ENCODE measurements at regions of chr11 and their contacts with region 1.

Region 1: GRCh38 chr11:12235947-12236743 is 125.8 kb downstream of the MICAL2 start:
- DNase-seq: peak; percentile 32
- ATAC-seq: peak; percentile 75
- H3K4me3 ChIP-seq: no peak overlapping the region
- H3K27ac ChIP-seq: no peak overlapping the region
- H3K4me1 ChIP-seq: peaks cover 4 to 23% of the 10 kb centered on the region in 2 experiments; a peak in 3 of 4 replicates
- H3K27me3 ChIP-seq: no peaks in the 10 kb centered on the region
- CTCF ChIP-seq: peak; percentile 55 to 82 (median 69)
- POLR2A ChIP-seq: no peak
- RAD21 ChIP-seq: peak; percentile 83

Region 2: GRCh38 chr11:12029738-12030363 is 206.3 kb before region 1 on chr11:
- CTCF ChIA-PET with region 1: no interaction called
- POLR2A ChIA-PET with region 1: no interaction called
- RAD21 ChIA-PET with region 1: no interaction called
- intact Hi-C with region 1: no loop called
- DNase-seq: peak; percentile 47
- ATAC-seq: peak; percentile 92
- H3K4me3 ChIP-seq: no peak overlapping the region
- H3K27ac ChIP-seq: no peak overlapping the region
- H3K4me1 ChIP-seq: peaks cover 8 to 18% of the 10 kb centered on the region in 2 experiments; a peak in 3 of 4 replicates
- H3K27me3 ChIP-seq: no peaks in the 10 kb centered on the region
- CTCF ChIP-seq: no peak
- POLR2A ChIP-seq: no peak
- RAD21 ChIP-seq: peak; percentile 31; the same call in 1 of the 2 replicates

Region 3: GRCh38 chr11:12052676-12053605 is 183.2 kb before region 1 on chr11:
- CTCF ChIA-PET with region 1: interaction called, 15 read pairs
- POLR2A ChIA-PET with region 1: no interaction called
- RAD21 ChIA-PET with region 1: interaction called in 1 of 2 experiments, 3 read pairs
- intact Hi-C with region 1: loop called (anchors 1 kb)
- DNase-seq: no peak
- ATAC-seq: peak; percentile 78
- H3K4me3 ChIP-seq: no peak overlapping the region
- H3K27ac ChIP-seq: no peak overlapping the region
- H3K4me1 ChIP-seq: no peaks in the 10 kb centered on the region
- H3K27me3 ChIP-seq: no peaks in the 10 kb centered on the region
- CTCF ChIP-seq: peak; percentile 33 to 47 (median 44); a peak in 4 of 6 replicates
- POLR2A ChIP-seq: no peak
- RAD21 ChIP-seq: peak; percentile 67

Region 4: GRCh38 chr11:12122083-12122482 is 114.1 kb before region 1 on chr11:
- CTCF ChIA-PET with region 1: interaction called, 4 read pairs
- POLR2A ChIA-PET with region 1: no interaction called
- RAD21 ChIA-PET with region 1: no interaction called
- intact Hi-C with region 1: loop called (anchors 1 kb)
- DNase-seq: peak; percentile 48
- ATAC-seq: peak; percentile 86
- H3K4me3 ChIP-seq: no peak overlapping the region
- H3K27ac ChIP-seq: no peak overlapping the region
- H3K4me1 ChIP-seq: peaks cover 32 to 57% of the 10 kb centered on the region in 2 experiments
- H3K27me3 ChIP-seq: no peaks in the 10 kb centered on the region
- CTCF ChIP-seq: peak; percentile 55 to 82 (median 72); a peak in 5 of 6 replicates
- POLR2A ChIP-seq: no peak
- RAD21 ChIP-seq: peak; percentile 77

Region 5: GRCh38 chr11:12318791-12319438 is 82.8 kb after region 1 on chr11:
- CTCF ChIA-PET with region 1: no interaction called
- POLR2A ChIA-PET with region 1: no interaction called
- RAD21 ChIA-PET with region 1: no interaction called
- intact Hi-C with region 1: no loop called
- DNase-seq: no peak
- ATAC-seq: no peak
- H3K4me3 ChIP-seq: no peak overlapping the region
- H3K27ac ChIP-seq: no peak overlapping the region
- H3K4me1 ChIP-seq: no peaks in the 10 kb centered on the region
- H3K27me3 ChIP-seq: no peaks in the 10 kb centered on the region
- CTCF ChIP-seq: no peak
- POLR2A ChIP-seq: no peak
- RAD21 ChIP-seq: no peak